Naive thymus-derived CD4-positive, alpha-beta T cell (primary cell): ENCODE measurements at regions of chr18 and their contacts with region 1.

Region 1: DNA sequence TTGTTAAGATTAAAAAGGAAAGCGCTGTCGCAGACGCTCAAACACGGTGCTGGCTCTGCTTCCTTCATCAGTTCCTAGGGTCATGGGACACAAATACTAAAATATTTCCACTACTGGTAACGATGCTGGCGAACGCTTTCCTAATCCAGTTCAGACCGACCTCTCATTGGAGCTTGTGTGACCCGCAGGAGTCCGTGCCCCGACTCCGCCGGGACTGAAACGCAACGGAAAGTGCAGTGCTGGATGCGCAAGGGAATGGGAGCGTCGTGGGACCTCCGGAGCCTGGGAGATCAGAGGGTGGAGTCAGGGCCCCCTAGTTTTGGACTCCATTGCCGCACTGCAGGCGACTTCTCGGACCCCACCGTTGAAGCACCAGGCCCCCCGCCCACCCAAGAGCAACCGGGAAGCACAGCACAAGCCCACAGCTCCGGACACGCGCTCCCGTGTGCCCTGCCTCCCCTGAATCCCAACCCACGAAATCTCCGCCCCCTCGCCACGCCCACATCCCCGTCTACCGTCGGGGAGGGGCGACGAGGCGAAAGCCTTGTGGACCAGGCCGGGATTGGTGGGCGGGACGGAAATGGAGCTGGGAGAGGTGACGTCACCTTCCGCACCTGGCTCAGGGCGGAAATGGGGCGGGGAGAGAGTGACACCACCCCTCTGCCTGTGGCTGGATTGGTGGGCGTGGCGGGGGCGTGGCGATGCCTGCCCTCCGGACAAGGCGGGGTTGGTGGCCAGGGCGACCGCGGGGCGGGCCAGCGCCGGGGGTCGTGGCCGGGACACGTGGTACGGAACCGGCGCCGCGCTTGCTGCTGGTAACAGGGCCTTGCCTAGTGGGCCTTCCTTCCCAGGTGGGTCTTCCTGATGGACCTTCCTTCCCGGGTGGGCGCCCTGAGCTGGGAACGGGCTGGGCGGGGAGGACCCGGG is at the start of gene CNDP2:
- DNase-seq: peak; percentile 93 to 100 (median 94)
- ATAC-seq: peak; percentile 89
- H3K4me3 ChIP-seq: peak within 1 kb of the TSS; percentile 75
- H3K4me3 Mint-ChIP-seq: peak within 1 kb of the TSS; percentile 79 to 98 (median 92)
- H3K27ac ChIP-seq: peak within 1 kb of the TSS; percentile 93
- H3K27ac Mint-ChIP-seq: peak within 1 kb of the TSS; percentile 95 to 100 (median 98)
- H3K4me1 ChIP-seq: peaks cover 33 to 43% of the 10 kb centered on the region in 2 donors
- H3K4me1 Mint-ChIP-seq: peaks cover 21 to 62% (median 49%) of the 10 kb centered on the region in 7 donors
- H3K27me3 ChIP-seq: no peaks in the 10 kb centered on the region
- H3K27me3 Mint-ChIP-seq: peaks cover 0 to 20% (median 0%) of the 10 kb centered on the region in 5 donors
- total RNA-seq, gene CNDP2: 112 to 169 (median 148) TPM

Region 2: GRCh38 chr18:74081966-74082741 is 413.7 kb before region 1 on chr18:
- CTCF ChIA-PET with region 1: interaction called, 14 read pairs
- POLR2A ChIA-PET with region 1: interaction called, 3 read pairs
- intact Hi-C with region 1: loop called (anchors 1 to 5 kb)
- DNase-seq: peak; percentile 37 to 80 (median 71)
- ATAC-seq: peak; percentile 94
- H3K4me3 ChIP-seq: peak overlapping the region; percentile 32
- H3K4me3 Mint-ChIP-seq: peak overlapping the region; percentile 71 to 96 (median 84)
- H3K27ac ChIP-seq: peak overlapping the region; percentile 74
- H3K27ac Mint-ChIP-seq: peak overlapping the region; percentile 93 to 98 (median 96)
- H3K4me1 ChIP-seq: peaks cover 0 to 16% of the 10 kb centered on the region in 2 donors
- H3K4me1 Mint-ChIP-seq: peaks cover 7 to 24% (median 21%) of the 10 kb centered on the region in 7 donors
- H3K27me3 ChIP-seq: no peaks in the 10 kb centered on the region
- H3K27me3 Mint-ChIP-seq: no peaks in the 10 kb centered on the region

Region 3: GRCh38 chr18:74291771-74292540 is 203.9 kb before region 1 on chr18 and contains the start of gene CYB5A:
- CTCF ChIA-PET with region 1: interaction called, 3 read pairs
- POLR2A ChIA-PET with region 1: no interaction called
- intact Hi-C with region 1: loop called (anchors 1 kb)
- DNase-seq: peak; percentile 97 to 99 (median 98)
- ATAC-seq: peak; percentile 99
- H3K4me3 ChIP-seq: peak within 1 kb of the TSS; percentile 91
- H3K4me3 Mint-ChIP-seq: peak within 1 kb of the TSS in 2 of 10 donors; percentile 92 to 94
- H3K27ac ChIP-seq: peak within 1 kb of the TSS; percentile 72
- H3K27ac Mint-ChIP-seq: peak within 1 kb of the TSS in 8 of 9 donors; percentile 56 to 95 (median 87)
- H3K4me1 ChIP-seq: peaks cover 0 to 3% of the 10 kb centered on the region in 2 donors
- H3K4me1 Mint-ChIP-seq: peaks cover 0 to 30% (median 15%) of the 10 kb centered on the region in 7 donors
- H3K27me3 ChIP-seq: no peaks in the 10 kb centered on the region
- H3K27me3 Mint-ChIP-seq: peaks cover 0 to 12% (median 0%) of the 10 kb centered on the region in 5 donors
- total RNA-seq, gene CYB5A: 13.9 to 36.9 (median 22.6) TPM

Region 4: DNA sequence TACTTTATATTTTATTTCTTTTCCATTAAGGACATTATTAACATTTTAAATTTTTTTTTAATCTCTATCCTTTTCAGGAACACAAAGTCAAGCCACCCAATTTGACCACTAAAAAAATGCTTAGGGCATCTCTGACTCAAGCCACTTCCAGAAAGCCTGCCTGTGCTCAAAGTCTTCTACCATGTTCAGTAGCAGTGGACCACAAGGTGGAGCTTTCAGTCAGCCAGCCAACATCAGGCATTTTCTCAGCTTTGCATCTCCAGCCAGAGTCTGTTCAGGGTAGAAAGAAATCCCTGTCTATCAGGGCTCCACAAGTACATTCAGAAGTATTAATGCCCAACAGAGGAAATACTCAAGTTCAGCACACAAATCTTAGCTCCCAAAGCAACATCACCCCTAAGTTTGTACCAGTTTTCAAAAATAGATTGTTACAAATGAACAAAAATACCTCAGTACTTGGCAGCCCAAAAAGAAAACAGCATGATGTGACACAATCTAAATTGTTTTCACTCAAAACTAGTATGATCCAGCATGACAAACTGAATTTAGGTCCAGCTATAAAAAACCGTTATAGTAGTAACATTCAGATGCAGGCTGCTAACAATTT is 142.6 kb before region 1 on chr18:
- CTCF ChIA-PET with region 1: interaction called, 269 read pairs
- POLR2A ChIA-PET with region 1: interaction called, 18 read pairs
- intact Hi-C with region 1: loop called (anchors 1 kb)
- DNase-seq: peak in 8 of 9 donors; percentile 37 to 79 (median 70)
- ATAC-seq: peak; percentile 82
- H3K4me3 ChIP-seq: no peak overlapping the region
- H3K4me3 Mint-ChIP-seq: no peak overlapping the region
- H3K27ac ChIP-seq: no peak overlapping the region
- H3K27ac Mint-ChIP-seq: peak overlapping the region in 2 of 9 donors; percentile 58 to 89
- H3K4me1 ChIP-seq: peaks cover 0 to 4% of the 10 kb centered on the region in 2 donors
- H3K4me1 Mint-ChIP-seq: peaks cover 3 to 23% (median 18%) of the 10 kb centered on the region in 7 donors
- H3K27me3 ChIP-seq: no peaks in the 10 kb centered on the region
- H3K27me3 Mint-ChIP-seq: peaks cover 0 to 24% (median 0%) of the 10 kb centered on the region in 5 donors

Region 5: DNA sequence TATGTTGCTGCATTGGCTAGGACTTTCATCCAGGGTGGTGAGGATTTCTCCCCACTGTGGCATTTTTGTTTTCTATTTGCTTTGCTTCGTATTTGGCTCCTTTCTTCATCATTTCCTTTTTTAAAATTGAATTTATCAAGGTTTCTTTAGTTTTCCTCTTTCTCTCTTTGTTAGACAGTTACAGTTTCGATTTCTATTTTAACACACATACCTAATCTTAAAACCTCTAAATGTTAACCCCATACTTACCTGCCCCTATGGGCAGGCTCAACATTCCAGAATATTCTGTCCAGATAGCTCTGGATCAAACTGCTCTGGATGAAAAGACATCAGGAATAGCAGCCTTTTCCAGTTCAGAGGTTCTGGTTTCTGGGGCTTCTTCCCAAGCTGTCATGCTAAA is 88.0 kb before region 1 on chr18:
- CTCF ChIA-PET with region 1: interaction called, 4 read pairs
- POLR2A ChIA-PET with region 1: interaction called, 3 read pairs
- intact Hi-C with region 1: loop called in 1 of 2 experiments (anchors 1 kb)
- DNase-seq: peak in 4 of 9 donors; percentile 12 to 28 (median 13)
- ATAC-seq: peak; percentile 41
- H3K4me3 ChIP-seq: peak overlapping the region; percentile 35
- H3K4me3 Mint-ChIP-seq: peak overlapping the region; percentile 71 to 93 (median 84)
- H3K27ac ChIP-seq: peak overlapping the region; percentile 70
- H3K27ac Mint-ChIP-seq: peak overlapping the region; percentile 92 to 99 (median 96)
- H3K4me1 ChIP-seq: peaks cover 5 to 19% of the 10 kb centered on the region in 2 donors
- H3K4me1 Mint-ChIP-seq: peaks cover 15 to 45% (median 37%) of the 10 kb centered on the region in 7 donors
- H3K27me3 ChIP-seq: no peaks in the 10 kb centered on the region
- H3K27me3 Mint-ChIP-seq: peaks cover 0 to 5% (median 0%) of the 10 kb centered on the region in 5 donors

Region 6: GRCh38 chr18:74468547-74469061 is 27.2 kb before region 1 on chr18:
- CTCF ChIA-PET with region 1: no interaction called
- POLR2A ChIA-PET with region 1: no interaction called
- intact Hi-C with region 1: no loop called
- DNase-seq: no peak
- ATAC-seq: no peak
- H3K4me3 ChIP-seq: no peak overlapping the region
- H3K4me3 Mint-ChIP-seq: no peak overlapping the region
- H3K27ac ChIP-seq: no peak overlapping the region
- H3K27ac Mint-ChIP-seq: no peak overlapping the region
- H3K4me1 ChIP-seq: no peaks in the 10 kb centered on the region
- H3K4me1 Mint-ChIP-seq: peaks cover 0 to 15% (median 0%) of the 10 kb centered on the region in 7 donors
- H3K27me3 ChIP-seq: no peaks in the 10 kb centered on the region
- H3K27me3 Mint-ChIP-seq: peaks cover 0 to 29% (median 0%) of the 10 kb centered on the region in 5 donors

Region 7: DNA sequence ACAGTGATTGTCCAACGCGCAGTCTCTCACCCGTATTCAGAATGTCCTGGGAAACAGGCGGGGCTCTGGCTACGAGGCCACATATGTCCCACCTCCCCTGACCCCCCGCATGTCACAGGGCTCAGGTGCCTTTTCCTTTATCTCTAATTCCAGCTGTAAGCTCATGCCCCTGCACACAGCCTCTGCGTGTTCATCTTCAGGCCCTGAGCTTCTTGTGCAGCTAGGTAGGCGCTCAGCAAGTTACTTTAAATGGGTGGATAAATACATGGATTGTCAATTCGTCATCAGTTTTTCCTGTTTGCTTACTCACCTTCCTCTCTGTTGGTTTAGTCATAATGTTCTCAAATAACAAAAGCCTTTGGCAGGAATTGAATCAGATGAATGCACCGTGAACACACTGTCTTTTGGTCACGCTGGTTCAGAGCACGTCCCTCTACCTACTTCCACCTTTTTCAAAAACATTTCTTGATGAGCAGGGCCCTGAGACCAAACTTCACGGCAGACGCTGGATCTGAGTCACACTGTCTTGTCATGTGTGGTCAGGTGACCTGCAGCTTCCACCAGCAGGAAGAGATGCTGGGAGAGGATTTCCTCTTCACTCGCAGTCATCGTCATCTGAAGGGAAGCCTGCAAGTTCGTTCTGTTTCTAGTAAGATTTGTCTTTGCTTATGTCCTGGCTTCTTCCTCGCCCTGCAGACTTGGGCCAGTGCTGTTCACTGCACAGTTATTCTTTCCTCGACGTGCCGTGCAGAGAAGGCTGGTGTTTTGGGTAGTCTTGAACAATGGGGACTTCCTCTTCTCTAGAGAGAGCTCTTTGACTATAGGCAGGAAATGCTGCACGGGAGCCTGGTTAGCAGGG is 575.0 kb after region 1 on chr18:
- CTCF ChIA-PET with region 1: no interaction called
- POLR2A ChIA-PET with region 1: no interaction called
- intact Hi-C with region 1: loop called in 1 of 2 experiments (anchors 5 kb)
- DNase-seq: peak; percentile 26 to 75 (median 71)
- ATAC-seq: peak; percentile 85
- H3K4me3 ChIP-seq: peak overlapping the region; percentile 46
- H3K4me3 Mint-ChIP-seq: peak overlapping the region; percentile 82 to 95 (median 87)
- H3K27ac ChIP-seq: peak overlapping the region; percentile 67
- H3K27ac Mint-ChIP-seq: peak overlapping the region; percentile 91 to 99 (median 97)
- H3K4me1 ChIP-seq: peaks cover 28 to 30% of the 10 kb centered on the region in 2 donors
- H3K4me1 Mint-ChIP-seq: peaks cover 29 to 57% (median 39%) of the 10 kb centered on the region in 7 donors
- H3K27me3 ChIP-seq: no peaks in the 10 kb centered on the region
- H3K27me3 Mint-ChIP-seq: no peaks in the 10 kb centered on the region

Region 8: DNA sequence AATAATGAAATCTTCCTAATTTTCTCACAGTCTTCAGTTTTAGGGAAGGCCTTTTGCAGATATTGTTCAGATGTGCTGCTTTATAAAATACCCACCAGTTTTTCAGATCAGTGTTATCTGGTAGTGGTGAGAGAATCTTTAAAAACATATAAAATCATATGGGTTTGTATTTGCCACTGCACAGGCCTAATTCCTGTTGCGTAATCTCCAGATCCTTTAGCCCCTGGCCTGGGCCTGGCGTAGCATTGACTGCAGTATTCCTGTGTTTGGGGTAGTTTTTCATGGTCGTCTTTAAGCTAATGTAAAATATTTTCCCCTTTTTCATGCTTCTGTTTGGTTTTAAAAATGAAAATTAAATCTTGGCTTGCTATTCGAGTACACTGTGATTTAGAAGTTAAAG is 757.9 kb after region 1 on chr18:
- CTCF ChIA-PET with region 1: no interaction called
- POLR2A ChIA-PET with region 1: no interaction called
- intact Hi-C with region 1: no loop called
- DNase-seq: no peak
- ATAC-seq: no peak
- H3K4me3 ChIP-seq: no peak overlapping the region
- H3K4me3 Mint-ChIP-seq: no peak overlapping the region
- H3K27ac ChIP-seq: no peak overlapping the region
- H3K27ac Mint-ChIP-seq: peak overlapping the region in 4 of 9 donors; percentile 9 to 62 (median 34)
- H3K4me1 ChIP-seq: peaks cover 6 to 16% of the 10 kb centered on the region in 2 donors
- H3K4me1 Mint-ChIP-seq: peaks cover 17 to 90% (median 80%) of the 10 kb centered on the region in 7 donors
- H3K27me3 ChIP-seq: no peaks in the 10 kb centered on the region
- H3K27me3 Mint-ChIP-seq: no peaks in the 10 kb centered on the region